ENCODE measurements at regions of chr17 and their contacts with region 1.

Region 1: DNA sequence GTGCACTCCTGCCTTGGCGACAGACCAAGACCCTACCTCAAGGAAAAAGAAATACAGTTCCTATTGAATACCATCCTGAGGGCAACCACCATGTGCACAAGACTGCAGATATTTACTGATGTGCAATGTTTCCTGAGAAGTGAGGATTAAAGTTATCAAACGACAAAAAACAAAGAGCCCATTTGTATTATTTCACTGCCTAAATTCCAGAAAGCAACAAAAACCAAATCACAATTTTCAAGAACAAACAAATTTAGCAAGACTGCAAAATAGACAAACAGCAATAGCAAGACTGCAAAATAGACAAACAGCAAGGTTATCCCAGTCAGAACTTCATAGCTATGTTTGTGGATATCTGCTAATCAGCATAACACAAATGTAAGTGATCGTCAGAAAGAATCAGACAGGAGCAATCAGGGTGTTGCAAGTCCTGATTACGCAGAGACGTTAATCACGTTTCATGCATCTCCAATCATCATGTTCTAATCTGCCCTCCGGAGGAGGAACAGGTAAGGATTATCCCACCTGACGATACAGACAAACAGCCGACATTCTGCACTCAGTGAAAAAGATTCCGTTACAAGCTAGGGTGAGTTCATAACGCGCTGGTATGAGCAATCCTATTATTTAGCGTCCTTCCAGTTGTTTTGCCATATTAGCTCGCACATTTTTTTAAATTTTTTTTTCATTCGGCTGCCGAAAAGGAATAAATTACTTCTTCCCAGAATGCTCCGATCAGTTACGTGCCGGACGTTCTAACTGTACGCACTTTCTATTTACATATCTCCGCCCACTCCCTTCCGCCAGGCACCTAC is 2.9 kb downstream of the TMEM107 start:
- DNase-seq: peak in 7 of 9 experiments; percentile 61 to 96 (median 80)
- ATAC-seq: peak; percentile 84
- H3K4me3 ChIP-seq: peak overlapping the region; percentile 39 to 46
- H3K4me3 Mint-ChIP-seq: peak overlapping the region; percentile 83
- H3K27ac ChIP-seq: peak overlapping the region; percentile 94 to 98
- H3K27ac Mint-ChIP-seq: peak overlapping the region; percentile 100
- H3K4me1 ChIP-seq: peaks cover 40% of the 10 kb centered on the region
- H3K4me1 Mint-ChIP-seq: peaks cover 50% of the 10 kb centered on the region
- H3K27me3 ChIP-seq: no peaks in the 10 kb centered on the region
- H3K27me3 Mint-ChIP-seq: no peaks in the 10 kb centered on the region
- CTCF ChIP-seq: no peak

Region 2: GRCh38 chr17:8068736-8069586 is 104.3 kb before region 1 on chr17:
- CTCF ChIA-PET with region 1: no interaction called
- POLR2A ChIA-PET with region 1: no interaction called
- intact Hi-C with region 1: no loop called
- DNase-seq: no peak
- ATAC-seq: no peak
- H3K4me3 ChIP-seq: no peak overlapping the region
- H3K4me3 Mint-ChIP-seq: no peak overlapping the region
- H3K27ac ChIP-seq: no peak overlapping the region
- H3K27ac Mint-ChIP-seq: no peak overlapping the region
- H3K4me1 ChIP-seq: peaks cover 19% of the 10 kb centered on the region
- H3K4me1 Mint-ChIP-seq: peaks cover 15% of the 10 kb centered on the region
- H3K27me3 ChIP-seq: peaks cover 3 to 16% of the 10 kb centered on the region in 2 experiments
- H3K27me3 Mint-ChIP-seq: peaks cover 29% of the 10 kb centered on the region
- CTCF ChIP-seq: no peak

Region 3: GRCh38 chr17:8156246-8156992 is 16.8 kb before region 1 on chr17:
- CTCF ChIA-PET with region 1: interaction called, 183 read pairs
- POLR2A ChIA-PET with region 1: interaction called, 101 read pairs
- intact Hi-C with region 1: loop called (anchors 1 to 2 kb)
- DNase-seq: peak; percentile 100
- ATAC-seq: peak; percentile 68
- H3K4me3 ChIP-seq: peak overlapping the region; percentile 82 to 90
- H3K4me3 Mint-ChIP-seq: no peak overlapping the region
- H3K27ac ChIP-seq: peak overlapping the region; percentile 100
- H3K27ac Mint-ChIP-seq: no peak overlapping the region
- H3K4me1 ChIP-seq: peaks cover 77% of the 10 kb centered on the region
- H3K4me1 Mint-ChIP-seq: peaks cover 68% of the 10 kb centered on the region
- H3K27me3 ChIP-seq: no peaks in the 10 kb centered on the region
- H3K27me3 Mint-ChIP-seq: no peaks in the 10 kb centered on the region
- CTCF ChIP-seq: no peak

Region 4: DNA sequence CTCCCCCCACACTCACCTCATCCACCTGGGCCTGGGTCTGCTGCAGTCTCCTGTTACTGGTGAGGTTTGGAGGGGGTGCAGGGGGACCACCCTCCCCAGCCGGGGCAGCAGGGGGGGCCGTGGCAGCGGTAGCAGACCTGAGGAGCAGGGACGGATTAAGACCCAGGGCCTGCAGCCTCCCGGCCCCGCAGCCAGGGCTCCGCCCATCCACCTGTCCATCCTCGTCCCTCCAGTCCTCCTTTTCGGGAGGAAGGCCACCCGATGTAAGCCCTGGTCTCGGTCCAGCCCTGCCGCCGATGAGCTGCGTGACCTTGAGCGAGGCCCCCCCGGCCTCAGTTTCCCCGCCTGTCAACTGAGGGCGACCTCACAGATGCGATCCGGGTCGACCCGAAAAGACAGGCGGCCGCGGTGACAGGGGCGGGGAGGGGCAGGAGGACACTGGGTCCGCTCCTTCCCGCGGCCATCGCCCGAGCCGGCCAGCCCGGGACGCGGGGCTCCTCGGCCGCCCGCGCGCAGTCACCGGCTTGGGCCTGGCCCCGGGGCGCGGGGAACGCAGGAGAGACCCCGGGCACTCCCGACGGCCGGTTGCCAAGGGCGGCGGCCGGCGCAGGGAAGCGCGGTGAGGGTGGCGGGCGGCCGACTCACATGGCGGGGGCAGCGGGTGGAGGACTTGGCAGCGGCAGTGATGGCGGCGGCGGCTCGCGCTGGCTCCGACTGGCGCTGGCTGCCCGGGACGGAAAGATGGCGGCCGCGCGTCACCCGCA is 10.8 kb before region 1 on chr17 and contains the start of gene VAMP2:
- CTCF ChIA-PET with region 1: interaction called, 183 read pairs
- POLR2A ChIA-PET with region 1: interaction called, 101 read pairs
- intact Hi-C with region 1: loop called (anchors 1 kb)
- DNase-seq: peak; percentile 72 to 92 (median 83)
- ATAC-seq: peak; percentile 47
- H3K4me3 ChIP-seq: peak within 1 kb of the TSS; percentile 96 to 99
- H3K4me3 Mint-ChIP-seq: peak within 1 kb of the TSS; percentile 92
- H3K27ac ChIP-seq: peak within 1 kb of the TSS; percentile 99 to 100
- H3K27ac Mint-ChIP-seq: peak within 1 kb of the TSS; percentile 98
- H3K4me1 ChIP-seq: peaks cover 62% of the 10 kb centered on the region
- H3K4me1 Mint-ChIP-seq: peaks cover 64% of the 10 kb centered on the region
- H3K27me3 ChIP-seq: no peaks in the 10 kb centered on the region
- H3K27me3 Mint-ChIP-seq: no peaks in the 10 kb centered on the region
- CTCF ChIP-seq: no peak
- total RNA-seq, gene VAMP2: 302 to 303 TPM